H1 (cell line): ENCODE measurements at regions of chr2 and their contacts with region 1.

Region 1: GRCh38 chr2:66445925-66446860 is 11.3 kb downstream of the MEIS1 start:
- DNase-seq: peak in 1 of 2 experiments; percentile 72
- H3K4me3 ChIP-seq: peak overlapping the region; percentile 16 to 63 (median 34)
- H3K27ac ChIP-seq: no peak overlapping the region
- H3K4me1 ChIP-seq: peaks cover 9 to 31% (median 13%) of the 10 kb centered on the region in 4 experiments
- H3K27me3 ChIP-seq: peaks cover 37 to 67% (median 53%) of the 10 kb centered on the region in 4 experiments
- CTCF ChIP-seq: peak; percentile 39 to 53 (median 40)
- EP300 ChIP-seq: no peak
- POLR2A ChIP-seq: no peak
- RAD21 ChIP-seq: peak; percentile 30 to 54; a peak in 3 of 4 replicates

Region 2: GRCh38 chr2:66434679-66435548 is 11.3 kb before region 1 on chr2 and contains the start of gene MEIS1:
- CTCF ChIA-PET with region 1: interaction called, 48 read pairs
- POLR2A ChIA-PET with region 1: interaction called, 6 read pairs
- DNase-seq: peak in 1 of 2 experiments; percentile 78
- H3K4me3 ChIP-seq: peak within 1 kb of the TSS; percentile 42 to 67 (median 48)
- H3K27ac ChIP-seq: no peak within 1 kb of the TSS
- H3K4me1 ChIP-seq: peaks cover 2 to 31% (median 11%) of the 10 kb centered on the region in 4 experiments
- H3K27me3 ChIP-seq: peaks cover 61 to 100% (median 90%) of the 10 kb centered on the region in 4 experiments
- CTCF ChIP-seq: no peak
- EP300 ChIP-seq: peak in 1 of 2 experiments; percentile 97; a peak in 2 of 3 replicates
- POLR2A ChIP-seq: no peak
- RAD21 ChIP-seq: no peak
- total RNA-seq, gene MEIS1: 0.63 and 1.2 TPM in 2 replicates

Region 3: DNA sequence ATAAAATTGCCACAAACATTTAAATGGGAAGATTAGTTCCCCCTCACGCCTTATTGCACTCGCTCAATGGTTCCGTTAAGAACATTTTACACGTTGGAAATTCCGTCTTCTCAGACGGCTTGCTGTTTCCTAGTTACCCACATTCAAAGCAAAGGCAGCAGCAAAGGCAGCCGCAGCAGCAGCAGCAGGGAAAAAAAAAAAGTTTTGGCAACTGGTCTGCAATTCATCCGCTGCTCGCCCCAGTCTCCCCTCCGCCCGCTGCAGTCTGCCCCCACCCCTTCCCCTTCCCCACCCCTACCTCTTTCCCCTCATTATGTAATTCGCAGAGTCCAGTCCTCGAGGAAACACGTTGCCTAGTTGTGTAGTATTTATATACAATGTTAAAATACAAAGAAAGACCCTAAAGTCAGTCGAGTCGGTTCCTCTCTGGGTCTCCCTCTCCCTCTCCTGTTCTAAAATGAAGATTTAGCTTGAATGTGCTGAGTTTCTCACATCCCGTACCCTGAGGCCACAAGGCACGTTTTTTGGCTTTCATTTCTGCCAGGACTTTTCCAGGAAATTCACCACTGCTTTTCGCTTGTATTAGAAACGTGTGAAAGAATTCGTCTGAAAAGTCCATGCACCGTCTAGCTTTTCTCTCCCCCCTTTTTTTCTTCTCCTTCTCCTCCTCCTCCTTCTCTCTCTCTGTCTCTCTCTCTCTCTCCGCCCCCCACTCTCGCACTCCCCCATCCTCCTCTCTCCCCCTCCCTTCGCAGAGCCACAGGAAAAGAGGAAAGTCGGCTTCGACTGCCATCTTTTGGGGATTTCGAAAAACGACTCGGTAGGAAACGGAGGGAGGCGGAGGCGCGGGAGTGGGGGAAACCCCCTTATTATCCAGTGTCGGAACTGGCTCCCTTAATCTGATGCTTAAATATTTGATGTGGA is 128.8 kb after region 1 on chr2:
- CTCF ChIA-PET with region 1: interaction called, 161 read pairs
- POLR2A ChIA-PET with region 1: interaction called, 9 read pairs
- DNase-seq: peak in 1 of 2 experiments; percentile 64
- H3K4me3 ChIP-seq: peak overlapping the region; percentile 1 to 65 (median 43); a peak in 5 of 8 replicates
- H3K27ac ChIP-seq: no peak overlapping the region
- H3K4me1 ChIP-seq: peaks cover 5 to 29% (median 12%) of the 10 kb centered on the region in 4 experiments
- H3K27me3 ChIP-seq: peaks cover 38 to 46% (median 41%) of the 10 kb centered on the region in 4 experiments
- CTCF ChIP-seq: peak; percentile 52 to 65 (median 62)
- EP300 ChIP-seq: 0 out of 3 replicates have a peak, but pooled peaks of 1 of the 2 experiments have one; percentile 27
- POLR2A ChIP-seq: no peak
- RAD21 ChIP-seq: peak; percentile 86 to 87

Region 4: DNA sequence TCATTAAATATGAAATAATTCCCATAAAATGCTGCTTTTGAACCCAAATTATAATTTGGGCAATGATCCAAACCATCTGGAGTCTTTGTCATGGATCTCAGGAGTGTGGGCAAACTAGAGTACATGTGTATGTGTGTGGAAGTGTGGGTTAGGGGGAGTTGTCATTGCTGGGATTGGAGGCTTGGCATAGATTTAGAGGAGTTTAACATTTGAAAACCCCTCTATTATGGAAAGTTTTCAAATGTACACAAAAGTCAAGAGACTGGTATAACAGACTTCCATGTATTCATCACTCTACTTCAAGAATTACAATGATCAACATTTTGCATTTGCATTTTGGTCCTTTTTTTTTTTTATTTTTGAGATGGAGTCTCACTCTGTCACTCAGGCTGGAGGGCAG is 147.8 kb after region 1 on chr2:
- CTCF ChIA-PET with region 1: no interaction called
- POLR2A ChIA-PET with region 1: no interaction called
- DNase-seq: no peak
- H3K4me3 ChIP-seq: no peak overlapping the region
- H3K27ac ChIP-seq: no peak overlapping the region
- H3K4me1 ChIP-seq: peaks cover 0 to 4% (median 0%) of the 10 kb centered on the region in 4 experiments; a peak in 2 of 7 replicates
- H3K27me3 ChIP-seq: no peaks in the 10 kb centered on the region
- CTCF ChIP-seq: no peak
- EP300 ChIP-seq: no peak
- POLR2A ChIP-seq: no peak
- RAD21 ChIP-seq: no peak